ENCODE measurements at regions of chr19 and their contacts with region 1.

Region 1: DNA sequence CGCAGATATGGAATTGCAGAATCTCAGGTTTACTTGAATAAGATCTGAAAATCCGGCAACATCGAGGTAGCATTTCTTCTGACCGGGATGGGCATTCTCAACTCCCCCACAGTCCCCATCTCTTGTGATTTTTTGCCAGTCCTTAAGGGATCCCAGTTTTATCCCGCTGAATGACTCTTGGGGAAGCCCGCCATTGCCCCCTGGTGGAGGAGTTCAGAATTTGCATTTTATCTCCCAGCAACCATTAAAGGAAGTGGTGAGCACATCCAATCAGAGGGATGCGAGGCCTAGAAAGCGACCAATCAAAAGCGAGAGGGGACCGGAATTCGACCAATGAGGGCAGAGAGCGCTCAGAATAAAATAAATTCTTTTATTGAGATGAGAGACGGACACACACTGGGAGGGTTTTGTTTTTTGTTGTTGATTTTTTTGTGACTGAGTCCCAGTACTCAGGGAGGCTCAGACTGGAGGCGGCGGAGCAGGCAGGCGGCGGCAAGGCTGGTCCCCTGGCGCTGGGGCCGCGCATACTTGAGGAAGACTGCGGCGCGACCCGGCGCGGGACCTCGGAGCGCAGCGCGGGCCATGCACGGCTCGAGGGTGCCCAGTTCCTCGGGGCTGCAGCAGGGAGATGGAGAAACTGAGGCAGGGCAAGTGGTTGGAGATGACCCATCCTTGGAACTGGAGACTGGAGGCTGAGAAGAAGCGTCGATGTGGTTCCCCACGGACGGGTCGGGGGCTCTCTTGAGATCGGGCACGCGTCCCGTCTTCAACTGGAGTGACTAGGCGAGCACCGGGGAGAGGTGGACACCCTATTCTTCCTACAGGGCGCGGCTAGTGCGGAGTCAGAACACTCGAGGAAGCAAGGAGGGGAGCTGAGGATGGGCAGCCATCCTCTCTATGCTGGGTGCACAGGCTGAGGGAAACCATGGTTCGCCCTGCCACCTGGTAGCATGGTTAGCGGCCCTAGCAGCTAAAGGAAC is 4.0 kb upstream of the TTC9B start:
- DNase-seq: peak; percentile 78 to 84
- H3K4me3 ChIP-seq: no peak overlapping the region
- H3K27ac ChIP-seq: no peak overlapping the region
- H3K4me1 ChIP-seq: peaks cover 0 to 8% of the 10 kb centered on the region in 2 donors
- H3K27me3 ChIP-seq: peaks cover 19 to 40% of the 10 kb centered on the region in 2 donors
- CTCF ChIP-seq: peak; percentile 82 to 93 (median 93)
- POLR2A ChIP-seq: no peak

Region 2: DNA sequence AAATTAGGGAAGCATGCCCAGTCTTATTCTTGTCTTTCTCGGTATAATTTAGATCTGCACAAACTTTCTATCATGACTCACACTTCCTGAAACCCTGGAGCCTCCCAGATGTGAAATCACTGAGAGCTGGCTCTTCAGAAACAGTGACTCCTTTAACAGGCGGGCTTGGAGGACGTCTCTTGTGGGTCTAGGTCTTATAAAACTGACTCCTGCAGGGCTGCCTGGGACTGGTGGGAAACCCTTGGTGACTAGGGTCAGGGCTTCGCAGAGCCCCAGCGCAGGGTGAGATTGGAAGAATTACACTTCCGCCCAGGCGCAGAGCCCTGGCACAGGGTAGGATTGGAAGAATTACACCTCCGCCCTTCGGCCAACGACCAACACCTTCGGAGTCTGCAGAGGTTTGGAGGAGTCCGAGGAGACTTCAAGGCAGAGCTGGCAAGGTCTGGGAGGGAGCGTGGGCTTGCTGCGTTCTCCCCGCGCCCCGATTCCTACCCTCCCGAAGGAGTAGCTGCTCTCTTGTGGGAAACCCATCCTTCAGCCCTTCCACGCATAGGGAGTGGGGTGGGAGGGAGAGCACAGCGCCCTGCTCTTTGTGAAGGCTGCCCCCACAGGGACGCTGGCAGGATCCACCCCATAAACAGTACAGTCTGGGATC is 74.3 kb before region 1 on chr19:
- intact Hi-C with region 1: loop called (anchors 5 kb)
- DNase-seq: no peak
- H3K4me3 ChIP-seq: no peak overlapping the region
- H3K27ac ChIP-seq: no peak overlapping the region
- H3K4me1 ChIP-seq: no peaks in the 10 kb centered on the region
- H3K27me3 ChIP-seq: no peaks in the 10 kb centered on the region
- CTCF ChIP-seq: no peak
- POLR2A ChIP-seq: no peak

Region 3: GRCh38 chr19:40305403-40305802 is 83.3 kb after region 1 on chr19:
- intact Hi-C with region 1: loop called (anchors 2 kb)
- DNase-seq: peak; percentile 73 to 75
- H3K4me3 ChIP-seq: no peak overlapping the region
- H3K27ac ChIP-seq: no peak overlapping the region
- H3K4me1 ChIP-seq: no peaks in the 10 kb centered on the region
- H3K27me3 ChIP-seq: no peaks in the 10 kb centered on the region
- CTCF ChIP-seq: peak; percentile 52 to 74 (median 69)
- POLR2A ChIP-seq: no peak

Measured in uterus (tissue), 4 donors.